Endothelial cell of umbilical vein (primary cell): ENCODE measurements at regions of chr9 and their contacts with region 1.

Region 1: GRCh38 chr9:10268531-10269485 is 344.0 kb downstream of the PTPRD start:
- DNase-seq: peak; percentile 84
- H3K4me3 ChIP-seq: no peak overlapping the region
- H3K27ac ChIP-seq: peak overlapping the region; percentile 51
- H3K4me1 ChIP-seq: peaks cover 23% of the 10 kb centered on the region
- H3K27me3 ChIP-seq: no peaks in the 10 kb centered on the region
- CTCF ChIP-seq: peak; percentile 63 to 65
- POLR2A ChIP-seq: no peak

Region 2: DNA sequence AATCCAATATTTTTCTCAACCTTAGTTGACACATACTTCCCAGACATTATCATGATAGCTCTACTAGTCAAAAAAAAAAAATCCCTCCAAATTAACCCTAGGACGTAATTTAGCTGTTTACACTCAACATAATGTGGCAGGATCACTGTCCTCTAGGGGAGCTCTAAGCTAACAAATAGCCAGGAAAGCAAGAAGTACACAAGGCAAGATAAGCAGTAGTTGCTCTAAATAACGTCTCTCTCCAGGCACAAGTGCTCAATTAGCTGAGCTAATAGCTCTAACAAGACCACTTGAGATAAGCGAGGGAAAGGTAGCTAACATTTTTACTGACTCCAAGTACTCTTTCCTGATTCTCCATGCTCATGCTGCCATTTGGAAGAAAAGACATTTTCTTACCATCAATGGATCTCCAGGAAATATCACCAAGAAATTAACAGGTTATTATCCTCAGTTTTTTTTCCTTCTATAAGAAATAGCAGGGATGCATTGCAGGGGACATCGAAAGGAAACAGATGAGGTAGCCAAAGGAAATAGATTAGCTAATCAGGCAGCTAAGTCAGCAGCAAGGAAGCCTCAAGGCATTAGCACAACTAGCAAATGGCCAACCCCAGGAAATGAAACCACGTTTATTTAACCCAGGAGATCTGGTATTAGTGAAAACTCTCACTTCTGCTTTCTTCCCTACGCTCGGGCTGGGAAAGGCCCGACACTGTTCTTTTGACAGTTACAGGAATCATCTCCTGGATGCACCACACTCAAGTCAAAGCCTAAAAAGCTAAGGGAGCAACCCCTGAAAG is 270.1 kb before region 1 on chr9:
- CTCF ChIA-PET with region 1: interaction called, 36 read pairs
- POLR2A ChIA-PET with region 1: no interaction called
- dilution Hi-C with region 1: no loop called
- intact Hi-C with region 1: loop called (anchors 1 kb)
- DNase-seq: peak; percentile 86
- H3K4me3 ChIP-seq: peak overlapping the region in 1 of 3 experiments; percentile 30
- H3K27ac ChIP-seq: peak overlapping the region; percentile 68
- H3K4me1 ChIP-seq: peaks cover 36% of the 10 kb centered on the region
- H3K27me3 ChIP-seq: no peaks in the 10 kb centered on the region
- CTCF ChIP-seq: peak; percentile 55 to 56
- POLR2A ChIP-seq: peak; percentile 43

Region 3: DNA sequence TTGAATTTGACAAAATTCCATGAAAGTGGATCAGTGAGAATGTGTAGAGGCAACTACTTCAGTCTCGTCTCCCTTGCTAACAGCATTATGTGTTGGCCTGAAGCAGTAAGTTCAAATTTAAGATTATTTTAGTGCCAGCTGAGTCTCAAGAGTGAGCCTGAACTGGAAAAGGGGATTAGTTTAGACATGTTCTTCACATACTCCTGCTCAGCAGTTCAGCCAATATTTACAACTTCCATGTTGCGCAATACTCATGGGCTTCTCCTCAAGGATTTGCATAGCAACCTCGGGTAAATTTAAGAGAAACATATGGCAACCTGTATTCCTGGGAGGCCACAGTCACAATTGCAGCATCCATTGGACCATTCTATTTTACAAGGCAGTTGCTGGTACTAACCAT is 209.8 kb before region 1 on chr9:
- CTCF ChIA-PET with region 1: interaction called, 91 read pairs
- POLR2A ChIA-PET with region 1: no interaction called
- dilution Hi-C with region 1: no loop called
- intact Hi-C with region 1: loop called (anchors 1 kb)
- DNase-seq: no peak
- H3K4me3 ChIP-seq: no peak overlapping the region
- H3K27ac ChIP-seq: no peak overlapping the region
- H3K4me1 ChIP-seq: peaks cover 11% of the 10 kb centered on the region
- H3K27me3 ChIP-seq: no peaks in the 10 kb centered on the region
- CTCF ChIP-seq: no peak
- POLR2A ChIP-seq: no peak

Region 4: DNA sequence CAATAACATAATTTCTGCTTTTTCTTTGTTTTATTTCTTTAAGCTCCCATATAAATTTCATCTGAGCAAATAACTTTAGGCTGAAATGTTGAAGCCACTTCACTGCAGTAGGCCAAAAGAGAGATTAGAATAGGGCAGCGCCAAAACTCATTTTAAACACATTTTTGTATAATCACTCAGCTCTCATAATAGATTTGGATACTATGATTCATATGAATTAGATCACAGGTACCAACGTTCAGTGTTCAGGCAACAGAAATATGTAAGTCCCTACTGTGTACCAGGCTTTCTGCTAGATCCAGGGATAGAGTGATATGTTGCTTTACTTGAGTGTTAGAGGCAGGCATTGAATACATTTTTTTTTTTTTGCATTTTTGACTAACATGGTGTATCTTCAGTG is 26.6 kb before region 1 on chr9:
- CTCF ChIA-PET with region 1: interaction called, 10 read pairs
- POLR2A ChIA-PET with region 1: no interaction called
- dilution Hi-C with region 1: no loop called
- intact Hi-C with region 1: no loop called
- DNase-seq: no peak
- H3K4me3 ChIP-seq: no peak overlapping the region
- H3K27ac ChIP-seq: no peak overlapping the region
- H3K4me1 ChIP-seq: no peaks in the 10 kb centered on the region
- H3K27me3 ChIP-seq: no peaks in the 10 kb centered on the region
- CTCF ChIP-seq: no peak
- POLR2A ChIP-seq: no peak

Region 5: GRCh38 chr9:10479172-10479571 is 210.4 kb after region 1 on chr9:
- CTCF ChIA-PET with region 1: no interaction called
- POLR2A ChIA-PET with region 1: no interaction called
- dilution Hi-C with region 1: no loop called
- intact Hi-C with region 1: no loop called
- DNase-seq: no peak
- H3K4me3 ChIP-seq: no peak overlapping the region
- H3K27ac ChIP-seq: no peak overlapping the region
- H3K4me1 ChIP-seq: no peaks in the 10 kb centered on the region
- H3K27me3 ChIP-seq: no peaks in the 10 kb centered on the region
- CTCF ChIP-seq: no peak
- POLR2A ChIP-seq: no peak

Region 6: DNA sequence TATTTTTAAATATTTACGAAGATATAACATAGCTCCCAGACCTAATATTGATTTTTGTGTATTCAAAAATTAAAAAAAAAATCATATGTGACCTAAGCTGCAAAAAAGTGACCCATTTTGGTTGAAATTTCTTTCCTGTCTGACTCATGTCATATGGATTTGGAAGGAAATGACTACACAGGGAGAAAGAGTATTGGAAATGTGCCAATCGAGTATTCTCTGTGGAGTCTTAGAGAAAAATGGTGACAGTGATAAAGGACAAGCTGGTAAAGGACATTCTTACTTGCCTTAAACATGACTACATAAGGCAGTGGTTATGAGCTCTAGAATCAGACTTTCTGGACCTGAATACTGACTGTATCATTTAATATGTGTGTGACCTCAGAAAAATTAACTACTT is 606.9 kb after region 1 on chr9:
- CTCF ChIA-PET with region 1: no interaction called
- POLR2A ChIA-PET with region 1: no interaction called
- dilution Hi-C with region 1: no loop called
- intact Hi-C with region 1: loop called (anchors 5 kb)
- DNase-seq: peak; percentile 84
- H3K4me3 ChIP-seq: no peak overlapping the region
- H3K27ac ChIP-seq: peak overlapping the region; percentile 77
- H3K4me1 ChIP-seq: peaks cover 16% of the 10 kb centered on the region
- H3K27me3 ChIP-seq: no peaks in the 10 kb centered on the region
- CTCF ChIP-seq: no peak
- POLR2A ChIP-seq: no peak